Dorsolateral prefrontal cortex (tissue), 120 donors: ENCODE measurements at regions of chr3 and their contacts with region 1.

Region 1: DNA sequence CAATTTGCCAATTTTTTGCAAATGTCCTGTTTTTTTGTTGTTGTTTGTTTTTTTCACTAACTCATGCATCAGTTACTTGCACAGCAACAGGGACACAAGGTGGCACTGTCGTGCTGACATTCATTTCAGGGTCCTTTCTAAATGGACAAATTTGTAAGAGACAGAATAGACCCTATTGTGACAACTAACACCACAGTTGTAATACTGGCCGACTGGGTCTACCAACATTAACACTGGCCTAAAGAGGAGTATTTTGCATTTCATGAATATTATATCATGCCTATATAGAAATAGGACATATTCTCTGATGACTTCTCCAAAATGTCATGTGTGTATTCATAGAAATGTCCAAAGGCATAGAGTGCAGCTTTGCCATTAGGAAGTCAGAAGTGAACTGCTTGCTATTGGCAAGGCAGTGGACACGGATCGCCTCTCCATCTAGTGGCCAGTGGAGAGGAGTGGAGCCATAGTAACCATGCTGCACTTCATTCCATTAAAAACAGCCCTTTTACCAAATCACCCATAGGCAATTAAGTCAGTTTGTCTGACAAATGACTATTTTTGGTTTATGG is 54.8 kb downstream of the ZBTB20 start:
- DNase-seq: peak; percentile 54 to 86 (median 76)
- H3K4me3 ChIP-seq: peak overlapping the region in 26 of 59 donors; percentile 2 to 48 (median 22)
- H3K27ac ChIP-seq: peak overlapping the region; percentile 27 to 92 (median 85)
- H3K27me3 ChIP-seq: no peaks in the 10 kb centered on the region
- CTCF ChIP-seq: peak; percentile 26 to 94 (median 78)

Region 2: DNA sequence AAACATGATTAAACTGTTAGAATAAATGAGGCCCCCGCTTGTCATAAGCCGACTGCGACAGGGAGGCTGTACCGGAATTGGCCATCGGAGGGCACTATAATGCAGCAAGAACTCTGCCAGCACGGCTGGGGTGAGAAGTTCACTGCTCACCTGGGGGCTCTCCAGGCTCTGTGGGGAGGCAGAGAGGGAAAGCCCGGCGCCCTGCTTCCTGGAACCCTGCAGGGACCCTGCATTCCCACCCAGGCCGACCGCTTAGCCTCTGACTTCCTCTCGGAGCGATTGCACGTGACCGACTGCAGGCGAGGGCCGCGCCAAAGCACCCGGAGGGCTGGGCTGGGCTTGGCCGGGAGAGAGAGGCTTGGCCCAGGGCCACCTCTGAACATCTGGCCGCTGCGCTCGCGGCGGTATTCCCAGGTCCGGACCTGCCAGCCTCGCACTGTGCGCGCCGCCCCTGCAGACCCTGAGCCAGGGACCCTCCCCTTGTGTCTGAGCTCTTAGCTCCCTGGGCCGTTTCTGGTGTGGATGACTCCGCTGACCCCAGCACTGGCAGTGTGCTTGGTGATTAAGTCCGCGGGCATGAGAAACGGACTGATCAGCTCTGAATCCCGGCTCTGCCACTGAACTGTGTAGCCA is 939.7 kb before region 1 on chr3:
- intact Hi-C with region 1: loop called in 1 of 2 experiments (anchors 5 kb)
- DNase-seq: peak; percentile 55 to 79 (median 69)
- H3K4me3 ChIP-seq: peak overlapping the region; percentile 29 to 80 (median 64)
- H3K27ac ChIP-seq: peak overlapping the region in 5 of 59 donors; percentile 8 to 62 (median 23)
- H3K27me3 ChIP-seq: no peaks in the 10 kb centered on the region
- CTCF ChIP-seq: peak; percentile 73 to 97 (median 91)

Region 3: DNA sequence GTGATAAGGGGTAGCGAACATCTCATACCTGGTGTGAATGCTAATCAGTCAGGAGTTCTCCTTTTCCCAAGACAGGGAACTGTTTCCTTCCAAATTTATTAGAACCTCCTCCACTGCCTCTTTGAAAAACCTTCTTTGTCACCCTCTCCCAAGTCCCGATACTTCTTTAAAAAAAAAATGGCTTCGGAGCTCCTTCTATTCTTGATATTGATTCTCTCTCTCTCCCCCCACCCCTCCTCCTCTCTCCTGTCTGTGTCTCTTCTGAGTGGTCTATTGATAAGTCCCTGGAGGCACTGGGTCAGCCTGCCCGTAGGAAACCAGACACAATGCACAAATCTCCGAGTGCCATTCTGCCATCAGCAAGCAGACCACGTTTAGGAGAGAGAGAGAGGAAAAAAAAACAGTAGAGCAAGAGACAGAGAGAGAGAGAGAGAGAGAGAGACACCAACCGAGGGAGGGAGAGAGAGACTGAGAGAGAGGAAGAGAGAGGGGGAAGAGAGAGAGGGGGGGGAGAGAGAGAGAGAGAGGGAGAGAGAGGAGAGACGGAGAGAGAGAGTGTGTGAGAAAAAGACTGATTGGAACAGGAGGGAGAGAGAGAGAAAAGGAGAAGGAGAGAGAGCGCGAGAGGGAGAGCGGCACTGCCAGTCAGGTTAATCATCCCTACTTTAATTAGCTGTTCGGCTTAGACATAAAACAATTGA is 637.6 kb before region 1 on chr3:
- intact Hi-C with region 1: loop called (anchors 10 kb)
- DNase-seq: peak in 4 of 10 donors; percentile 29 to 49 (median 42)
- H3K4me3 ChIP-seq: peak overlapping the region; percentile 31 to 76 (median 59)
- H3K27ac ChIP-seq: peak overlapping the region; percentile 36 to 99 (median 96)
- H3K27me3 ChIP-seq: no peaks in the 10 kb centered on the region
- CTCF ChIP-seq: peak in 1 of 56 donors; percentile 9

Region 4: DNA sequence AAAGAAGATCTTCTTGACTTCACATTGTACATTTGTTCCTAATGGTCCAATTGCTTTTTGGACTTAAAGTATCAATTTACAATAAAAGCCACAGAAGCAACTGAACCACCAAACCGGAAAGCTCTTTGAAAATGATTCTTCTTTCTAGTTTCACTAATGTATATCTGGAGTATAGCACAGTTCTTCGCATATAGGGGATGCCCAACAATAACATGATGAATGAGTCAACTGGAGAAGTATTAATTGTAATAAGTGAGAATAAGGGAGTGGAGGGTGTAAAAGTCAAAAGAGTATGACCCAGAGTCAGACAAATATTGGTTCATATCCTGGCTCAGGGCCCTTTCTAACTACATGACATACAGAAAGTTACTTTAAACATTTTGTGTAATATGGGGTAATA is 370.4 kb before region 1 on chr3:
- intact Hi-C with region 1: no loop called
- DNase-seq: no peak
- H3K4me3 ChIP-seq: no peak overlapping the region
- H3K27ac ChIP-seq: no peak overlapping the region
- H3K27me3 ChIP-seq: no peaks in the 10 kb centered on the region
- CTCF ChIP-seq: no peak

Region 5: DNA sequence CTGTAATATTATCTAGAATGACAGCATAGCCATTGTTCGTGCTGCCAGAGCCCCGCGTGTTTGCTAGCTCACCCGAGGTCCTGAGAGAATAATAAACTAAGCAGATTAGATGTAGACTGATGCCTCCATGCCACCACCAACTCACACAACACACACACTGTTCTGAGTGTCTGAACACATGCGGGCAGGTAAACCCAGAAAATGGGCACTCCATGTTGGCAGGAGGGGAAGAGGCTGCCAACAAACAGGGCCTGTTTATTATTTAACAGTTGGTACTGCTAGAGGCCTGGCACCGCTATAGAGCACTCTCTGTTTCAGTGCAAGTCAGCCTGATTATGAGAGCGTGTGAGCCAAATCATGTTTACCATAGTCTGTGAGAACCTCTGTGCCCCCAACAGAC is 244.2 kb before region 1 on chr3:
- intact Hi-C with region 1: loop called in 1 of 2 experiments (anchors 5 kb)
- DNase-seq: peak; percentile 42 to 88 (median 71)
- H3K4me3 ChIP-seq: peak overlapping the region in 18 of 59 donors; percentile 1 to 37 (median 16)
- H3K27ac ChIP-seq: peak overlapping the region; percentile 73 to 100 (median 96)
- H3K27me3 ChIP-seq: no peaks in the 10 kb centered on the region
- CTCF ChIP-seq: peak in 2 of 56 donors; percentile 11 to 12

Region 6: DNA sequence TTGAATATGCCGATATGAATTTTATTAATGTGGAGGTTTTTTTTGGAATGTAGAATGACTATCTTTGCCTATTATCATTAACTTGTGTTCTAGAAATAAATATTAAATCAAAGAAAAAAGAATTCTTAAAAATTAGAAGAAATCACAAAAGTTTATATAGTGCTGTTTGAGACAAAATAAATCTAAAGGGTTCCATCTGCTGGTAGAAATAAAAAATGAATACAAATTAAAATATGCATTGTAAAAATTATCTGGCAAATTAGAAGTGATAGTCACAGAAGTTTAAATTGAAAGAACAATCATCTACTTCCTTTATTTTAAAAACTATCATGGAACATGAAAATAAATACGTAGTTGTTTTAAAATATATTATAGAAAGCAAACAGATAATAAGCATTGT is 77.5 kb after region 1 on chr3:
- intact Hi-C with region 1: loop called in 1 of 2 experiments (anchors 5 kb)
- DNase-seq: no peak
- H3K4me3 ChIP-seq: no peak overlapping the region
- H3K27ac ChIP-seq: no peak overlapping the region
- H3K27me3 ChIP-seq: no peaks in the 10 kb centered on the region
- CTCF ChIP-seq: peak; percentile 29 to 83 (median 59)

Region 7: GRCh38 chr3:115623044-115623868 is 531.0 kb after region 1 on chr3 and contains the start of gene GAP43:
- intact Hi-C with region 1: no loop called
- DNase-seq: peak; percentile 22 to 81 (median 70)
- H3K4me3 ChIP-seq: peak within 1 kb of the TSS; percentile 14 to 73 (median 57)
- H3K27ac ChIP-seq: peak within 1 kb of the TSS in 45 of 59 donors; percentile 0 to 83 (median 57)
- H3K27me3 ChIP-seq: peaks cover 0 to 50% (median 0%) of the 10 kb centered on the region in 45 donors
- CTCF ChIP-seq: no peak
- total RNA-seq, gene GAP43: 88.9 to 514 (median 300) TPM